B cell (primary cell): ENCODE measurements at regions of chr16 and their contacts with region 1.

Region 1: GRCh38 chr16:84726079-84726668 is 26.4 kb downstream of the USP10 start:
- DNase-seq: peak; percentile 85
- ATAC-seq: peak; percentile 55
- H3K4me3 ChIP-seq: peak overlapping the region; percentile 28 to 59 (median 52)
- H3K4me3 Mint-ChIP-seq: peak overlapping the region; percentile 87
- H3K27ac ChIP-seq: peak overlapping the region; percentile 55 to 78
- H3K27ac Mint-ChIP-seq: peak overlapping the region; percentile 90
- H3K4me1 ChIP-seq: peaks cover 44 to 58% of the 10 kb centered on the region in 2 donors
- H3K4me1 Mint-ChIP-seq: peaks cover 74% of the 10 kb centered on the region
- H3K27me3 ChIP-seq: no peaks in the 10 kb centered on the region
- H3K27me3 Mint-ChIP-seq: no peaks in the 10 kb centered on the region
- CTCF ChIP-seq: peak; percentile 99

Region 2: DNA sequence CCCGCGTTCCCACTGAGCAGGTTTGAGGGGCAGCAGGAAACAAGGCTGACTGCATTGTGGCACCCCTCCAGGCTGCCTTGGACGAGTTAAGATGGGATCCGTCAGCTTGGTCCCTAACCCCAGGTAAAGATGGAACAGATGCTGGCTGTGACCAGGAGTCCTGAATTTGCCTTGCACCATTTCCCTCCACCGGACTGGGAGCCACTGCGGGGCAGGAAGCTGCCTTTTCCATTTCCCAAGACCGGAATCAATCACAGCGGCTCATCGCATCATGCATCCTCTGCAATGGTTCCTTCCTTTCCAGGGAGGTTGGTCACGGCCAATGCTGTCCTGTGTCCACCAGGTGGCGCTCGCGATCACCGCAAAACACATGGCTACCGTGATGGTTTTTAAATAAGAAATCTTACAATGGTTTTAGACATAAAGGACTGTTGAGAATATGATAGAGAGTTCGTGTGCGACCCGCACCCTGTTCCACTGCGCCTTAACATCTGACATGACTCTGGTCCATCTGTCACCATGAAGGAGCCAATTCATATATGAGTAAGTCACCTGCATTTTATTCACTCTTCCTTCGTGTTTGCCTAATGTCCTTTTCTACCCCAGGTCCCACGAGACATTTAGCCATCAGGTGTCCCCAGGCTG is 214.9 kb before region 1 on chr16:
- CTCF ChIA-PET with region 1: interaction called, 67 read pairs
- POLR2A ChIA-PET with region 1: interaction called, 3 read pairs
- intact Hi-C with region 1: loop called (anchors 1 kb)
- DNase-seq: peak; percentile 87
- ATAC-seq: peak; percentile 40
- H3K4me3 ChIP-seq: no peak overlapping the region
- H3K4me3 Mint-ChIP-seq: peak overlapping the region; percentile 44
- H3K27ac ChIP-seq: no peak overlapping the region
- H3K27ac Mint-ChIP-seq: peak overlapping the region; percentile 77
- H3K4me1 ChIP-seq: peaks cover 41 to 57% of the 10 kb centered on the region in 2 donors
- H3K4me1 Mint-ChIP-seq: peaks cover 49% of the 10 kb centered on the region
- H3K27me3 ChIP-seq: peaks cover 0 to 3% (median 0%) of the 10 kb centered on the region in 4 experiments
- H3K27me3 Mint-ChIP-seq: no peaks in the 10 kb centered on the region
- CTCF ChIP-seq: peak; percentile 98

Region 3: GRCh38 chr16:84647828-84648594 is 78.2 kb before region 1 on chr16 and contains the start of gene KLHL36:
- CTCF ChIA-PET with region 1: interaction called, 36 read pairs
- POLR2A ChIA-PET with region 1: no interaction called
- intact Hi-C with region 1: no loop called
- DNase-seq: peak; percentile 83
- ATAC-seq: peak; percentile 90
- H3K4me3 ChIP-seq: peak within 1 kb of the TSS; percentile 42 to 75 (median 70)
- H3K4me3 Mint-ChIP-seq: peak within 1 kb of the TSS; percentile 92
- H3K27ac ChIP-seq: peak within 1 kb of the TSS; percentile 56 to 83
- H3K27ac Mint-ChIP-seq: peak within 1 kb of the TSS; percentile 92
- H3K4me1 ChIP-seq: peaks cover 34 to 44% of the 10 kb centered on the region in 2 donors
- H3K4me1 Mint-ChIP-seq: peaks cover 51% of the 10 kb centered on the region
- H3K27me3 ChIP-seq: no peaks in the 10 kb centered on the region
- H3K27me3 Mint-ChIP-seq: no peaks in the 10 kb centered on the region
- CTCF ChIP-seq: no peak
- total RNA-seq, gene KLHL36: 133 and 135 TPM in 2 replicates

Region 4: DNA sequence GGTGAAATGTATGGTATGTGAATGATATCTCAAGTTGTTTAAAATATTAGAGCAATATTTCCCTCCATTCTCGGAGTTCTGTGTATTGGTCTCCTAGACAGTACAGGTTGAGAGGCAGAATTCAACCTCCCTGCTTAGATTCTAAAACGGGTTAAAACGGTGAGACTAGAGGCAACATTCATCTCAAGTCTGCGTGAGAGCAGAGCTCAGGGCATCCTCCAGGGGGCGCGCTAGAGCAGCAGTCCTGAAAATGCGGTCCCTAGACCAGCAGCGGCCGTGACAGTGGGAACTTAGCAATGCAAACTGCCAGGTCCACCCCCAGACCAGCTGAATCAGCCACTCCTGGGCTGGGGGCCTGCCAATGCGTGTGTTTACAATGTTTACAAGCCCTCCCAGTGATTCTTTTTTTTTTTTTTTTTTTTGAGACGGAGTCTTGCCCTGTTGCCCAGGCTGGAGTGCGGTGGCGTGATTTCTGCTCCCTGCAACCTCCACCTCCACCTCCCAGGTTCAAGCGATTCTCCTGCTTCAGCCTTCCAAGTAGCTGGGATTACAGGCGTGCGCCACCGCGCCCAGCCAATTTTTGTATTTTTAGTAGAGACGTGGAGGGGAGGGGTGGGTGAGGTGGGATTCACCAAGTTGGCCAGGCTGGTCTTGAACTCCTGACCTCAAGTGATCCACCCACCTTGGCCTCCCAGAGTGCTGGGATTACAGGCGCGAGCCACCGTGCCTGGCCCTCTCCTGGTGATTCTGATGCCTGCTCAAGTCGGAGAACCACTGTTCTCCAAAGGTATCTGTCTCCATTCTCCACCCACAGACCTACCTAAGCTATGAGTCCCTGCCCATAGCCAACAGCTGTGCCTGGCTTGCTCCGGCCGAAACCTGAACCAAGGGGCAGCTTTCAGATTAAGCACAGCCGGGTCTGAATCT is 53.6 kb before region 1 on chr16:
- CTCF ChIA-PET with region 1: interaction called, 108 read pairs
- POLR2A ChIA-PET with region 1: interaction called, 6 read pairs
- intact Hi-C with region 1: loop called (anchors 1 kb)
- DNase-seq: peak; percentile 82
- ATAC-seq: peak; percentile 96
- H3K4me3 ChIP-seq: no peak overlapping the region
- H3K4me3 Mint-ChIP-seq: no peak overlapping the region
- H3K27ac ChIP-seq: no peak overlapping the region
- H3K27ac Mint-ChIP-seq: peak overlapping the region; percentile 28
- H3K4me1 ChIP-seq: peaks cover 0 to 15% of the 10 kb centered on the region in 2 donors
- H3K4me1 Mint-ChIP-seq: peaks cover 10% of the 10 kb centered on the region
- H3K27me3 ChIP-seq: no peaks in the 10 kb centered on the region
- H3K27me3 Mint-ChIP-seq: peaks cover 3% of the 10 kb centered on the region
- CTCF ChIP-seq: peak; percentile 91

Region 5: GRCh38 chr16:84699712-84700445 is 26.3 kb before region 1 on chr16 and contains the start of gene USP10:
- CTCF ChIA-PET with region 1: interaction called, 24 read pairs
- POLR2A ChIA-PET with region 1: interaction called, 3 read pairs
- intact Hi-C with region 1: loop called (anchors 2 kb)
- DNase-seq: peak; percentile 94
- ATAC-seq: peak; percentile 78
- H3K4me3 ChIP-seq: peak within 1 kb of the TSS; percentile 71 to 88 (median 80)
- H3K4me3 Mint-ChIP-seq: peak within 1 kb of the TSS; percentile 99
- H3K27ac ChIP-seq: peak within 1 kb of the TSS; percentile 69 to 91
- H3K27ac Mint-ChIP-seq: peak within 1 kb of the TSS; percentile 98
- H3K4me1 ChIP-seq: peaks cover 13 to 37% of the 10 kb centered on the region in 2 donors
- H3K4me1 Mint-ChIP-seq: peaks cover 41% of the 10 kb centered on the region
- H3K27me3 ChIP-seq: no peaks in the 10 kb centered on the region
- H3K27me3 Mint-ChIP-seq: no peaks in the 10 kb centered on the region
- CTCF ChIP-seq: no peak
- total RNA-seq, gene USP10: 130 and 134 TPM in 2 replicates

Region 6: GRCh38 chr16:84738255-84739038 is 12.3 kb after region 1 on chr16:
- CTCF ChIA-PET with region 1: interaction called, 63 read pairs
- POLR2A ChIA-PET with region 1: interaction called, 6 read pairs
- intact Hi-C with region 1: loop called (anchors 1 kb)
- DNase-seq: peak; percentile 89
- ATAC-seq: peak; percentile 89
- H3K4me3 ChIP-seq: no peak overlapping the region
- H3K4me3 Mint-ChIP-seq: peak overlapping the region; percentile 46
- H3K27ac ChIP-seq: no peak overlapping the region
- H3K27ac Mint-ChIP-seq: peak overlapping the region; percentile 27
- H3K4me1 ChIP-seq: peaks cover 6 to 12% of the 10 kb centered on the region in 2 donors
- H3K4me1 Mint-ChIP-seq: peaks cover 30% of the 10 kb centered on the region
- H3K27me3 ChIP-seq: no peaks in the 10 kb centered on the region
- H3K27me3 Mint-ChIP-seq: no peaks in the 10 kb centered on the region
- CTCF ChIP-seq: peak; percentile 96

Region 7: DNA sequence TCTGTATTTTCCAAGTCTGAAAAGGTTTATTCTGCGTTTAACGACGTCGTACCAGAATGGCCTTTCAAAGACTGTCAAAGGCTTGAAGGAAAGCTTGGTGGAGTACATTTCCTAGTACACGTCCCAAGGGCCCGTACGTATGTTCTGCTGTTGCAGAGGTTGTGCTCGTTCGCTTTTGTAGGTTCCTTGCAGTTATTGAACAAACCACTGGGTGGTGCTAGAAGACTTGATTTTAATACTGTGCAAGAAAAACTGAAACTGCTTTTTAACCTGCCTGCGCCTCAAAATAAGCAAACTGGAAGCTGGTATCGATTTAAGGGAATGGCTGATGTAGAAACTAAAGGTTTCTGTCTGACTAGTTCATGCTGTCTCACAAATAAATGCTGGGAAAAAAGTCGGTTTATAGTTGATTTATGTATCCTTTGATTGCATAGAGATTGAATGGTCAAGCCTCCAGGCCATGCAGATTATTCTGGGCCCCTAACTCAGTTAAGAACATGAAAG is 28.2 kb after region 1 on chr16:
- CTCF ChIA-PET with region 1: interaction called, 12 read pairs
- POLR2A ChIA-PET with region 1: no interaction called
- intact Hi-C with region 1: no loop called
- DNase-seq: peak; percentile 89
- ATAC-seq: peak; percentile 88
- H3K4me3 ChIP-seq: peak overlapping the region in 1 of 5 experiments; percentile 21
- H3K4me3 Mint-ChIP-seq: peak overlapping the region; percentile 12
- H3K27ac ChIP-seq: no peak overlapping the region
- H3K27ac Mint-ChIP-seq: peak overlapping the region; percentile 57
- H3K4me1 ChIP-seq: peaks cover 44 to 47% of the 10 kb centered on the region in 2 donors
- H3K4me1 Mint-ChIP-seq: peaks cover 72% of the 10 kb centered on the region
- H3K27me3 ChIP-seq: no peaks in the 10 kb centered on the region
- H3K27me3 Mint-ChIP-seq: no peaks in the 10 kb centered on the region
- CTCF ChIP-seq: peak; percentile 91